ENCODE measurements at regions of chr15 and their contacts with region 1.

Region 1: GRCh38 chr15:74433592-74434262 is at the start of gene SEMA7A:
- DNase-seq: peak; percentile 38 to 82 (median 63)
- ATAC-seq: peak; percentile 79 to 86
- H3K4me3 Mint-ChIP-seq: peak within 1 kb of the TSS; percentile 75 to 90 (median 82)
- H3K27ac Mint-ChIP-seq: peak within 1 kb of the TSS in 9 of 10 donors; percentile 3 to 87 (median 80)
- H3K4me1 Mint-ChIP-seq: peaks cover 19 to 61% (median 45%) of the 10 kb centered on the region in 4 donors
- H3K27me3 Mint-ChIP-seq: no peaks in the 10 kb centered on the region
- polyA plus RNA-seq, gene SEMA7A: 0.09 to 1.7 (median 0.20) TPM

Region 2: DNA sequence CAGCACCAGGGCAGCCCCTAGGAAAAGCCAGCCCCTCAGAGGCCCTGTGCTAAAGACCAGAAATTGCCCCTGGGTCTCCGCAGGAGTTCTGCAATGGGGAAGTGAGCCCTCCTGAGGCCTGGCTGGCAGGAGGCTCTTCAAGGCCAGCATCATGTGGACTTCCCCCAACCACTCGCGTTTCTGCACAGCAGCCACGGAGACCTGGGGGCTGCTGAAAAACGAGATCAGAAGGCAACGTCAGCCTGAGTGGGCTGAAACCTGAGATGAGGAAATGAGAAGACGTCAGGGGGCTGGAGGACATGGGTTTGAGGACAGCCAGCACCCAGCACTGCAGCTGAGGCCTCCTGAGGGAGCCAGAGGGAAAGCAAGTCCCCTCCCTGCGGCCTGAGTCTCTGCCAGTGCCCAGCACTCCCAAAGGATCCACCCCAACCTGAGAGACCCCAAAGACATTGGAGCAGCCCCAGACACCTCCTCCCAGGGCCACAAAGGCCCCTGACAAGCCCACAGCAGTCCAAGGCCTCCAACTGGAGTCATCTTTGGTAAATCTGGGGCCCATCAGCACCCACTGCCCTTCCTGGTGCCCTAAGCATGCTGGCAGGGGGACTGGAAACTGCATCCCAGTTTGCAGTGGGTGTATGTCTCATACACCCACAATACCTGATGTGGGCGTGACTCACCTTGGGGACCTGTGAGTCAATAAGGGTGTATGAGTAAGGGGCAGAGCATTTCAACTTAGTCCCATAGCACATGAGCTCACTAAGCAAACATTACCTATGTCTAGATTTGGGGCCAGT is 37.1 kb before region 1 on chr15:
- POLR2A ChIA-PET with region 1: interaction called, 12 read pairs
- DNase-seq: peak in 6 of 10 donors; percentile 19 to 48 (median 36)
- ATAC-seq: peak; percentile 51 to 70
- H3K4me3 Mint-ChIP-seq: peak overlapping the region in 6 of 10 donors; percentile 23 to 77 (median 65)
- H3K27ac Mint-ChIP-seq: peak overlapping the region in 9 of 10 donors; percentile 19 to 96 (median 84)
- H3K4me1 Mint-ChIP-seq: peaks cover 39 to 85% (median 72%) of the 10 kb centered on the region in 4 donors
- H3K27me3 Mint-ChIP-seq: no peaks in the 10 kb centered on the region

Region 3: DNA sequence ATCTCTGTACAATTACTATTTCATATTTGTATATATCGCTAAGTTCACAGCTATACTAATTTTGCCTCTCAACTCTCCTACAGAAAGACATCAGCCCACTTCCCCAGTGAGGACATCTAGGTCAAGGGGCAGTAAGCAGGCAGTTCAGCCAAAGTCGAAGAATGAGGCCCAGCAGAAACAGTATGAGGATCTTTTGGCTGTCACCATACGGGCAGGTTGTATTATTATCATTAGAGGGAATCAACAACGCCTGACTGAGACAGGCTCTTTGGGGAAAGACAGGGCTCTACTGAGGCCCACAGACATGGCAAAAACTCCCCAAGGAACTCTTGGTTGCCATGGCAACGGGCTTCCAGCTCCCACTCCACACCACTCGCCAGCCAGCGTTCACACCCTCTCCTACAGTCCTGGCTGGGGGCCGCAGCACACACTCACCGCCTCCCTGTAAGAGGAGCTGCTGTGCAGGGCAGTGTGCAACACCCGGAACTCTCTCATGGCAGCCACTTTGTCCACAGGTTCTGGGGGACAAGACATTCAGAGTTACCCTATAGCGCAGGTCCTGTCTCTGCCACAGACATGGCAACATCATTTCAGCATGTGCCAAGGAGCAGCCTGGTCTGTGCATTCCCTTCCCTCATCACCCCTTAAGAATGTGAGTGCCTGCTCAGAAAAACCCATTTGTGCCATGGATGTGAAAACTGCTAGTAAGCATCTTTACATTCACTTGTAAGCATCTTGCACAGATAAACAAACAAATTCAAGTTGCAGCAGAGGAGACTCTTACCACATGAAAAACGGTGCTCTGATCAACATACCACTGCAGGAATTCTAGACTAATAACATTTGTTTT is 18.4 kb after region 1 on chr15:
- POLR2A ChIA-PET with region 1: no interaction called
- DNase-seq: no peak
- ATAC-seq: no peak
- H3K4me3 Mint-ChIP-seq: no peak overlapping the region
- H3K27ac Mint-ChIP-seq: peak overlapping the region in 3 of 10 donors; percentile 12 to 48 (median 40)
- H3K4me1 Mint-ChIP-seq: peaks cover 18 to 47% (median 33%) of the 10 kb centered on the region in 4 donors
- H3K27me3 Mint-ChIP-seq: no peaks in the 10 kb centered on the region